Tibial artery (tissue), 4 donors: ENCODE measurements at regions of chr2 and their contacts with region 1.

Region 1: DNA sequence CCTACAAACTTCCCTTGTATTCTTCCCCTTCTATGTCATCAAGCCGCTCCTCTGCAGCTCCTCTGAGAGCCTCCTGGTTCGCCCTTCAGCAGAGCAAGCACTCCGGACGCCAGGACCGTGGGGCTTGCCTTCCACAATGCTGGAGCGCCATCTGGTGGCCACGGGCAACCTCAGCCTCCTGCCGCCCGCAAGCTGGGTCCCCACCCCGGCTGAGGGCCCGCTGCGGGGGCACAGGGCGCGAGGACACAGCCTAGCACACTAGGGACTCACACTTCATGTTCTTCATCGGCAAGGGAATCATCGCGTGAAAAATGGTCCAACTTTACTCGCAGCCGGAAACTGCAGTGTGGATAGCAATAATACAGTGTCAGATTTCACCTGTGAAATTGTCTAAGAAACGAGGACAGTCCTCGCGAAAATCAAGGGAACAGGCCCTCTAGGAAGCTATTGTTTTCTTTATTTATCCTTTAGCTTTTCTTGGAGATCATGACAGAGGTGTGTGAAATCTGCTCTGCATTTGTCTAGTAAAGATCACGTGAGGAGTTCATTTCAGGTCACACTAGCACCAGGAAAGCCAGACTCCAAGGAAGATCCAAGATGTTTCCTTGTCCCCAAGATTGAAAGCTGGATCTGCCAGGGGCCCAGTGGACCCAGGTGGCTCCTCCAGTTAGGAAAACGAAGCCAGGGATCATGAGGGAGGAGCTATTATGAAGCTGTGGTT is 5.8 kb downstream of the PRLH start:
- DNase-seq: peak; percentile 88 to 93
- H3K4me3 ChIP-seq: no peak overlapping the region
- H3K27ac ChIP-seq: no peak overlapping the region
- H3K4me1 ChIP-seq: peaks cover 0 to 20% (median 6%) of the 10 kb centered on the region in 4 donors
- H3K27me3 ChIP-seq: no peaks in the 10 kb centered on the region
- CTCF ChIP-seq: peak; percentile 98 to 99

Region 2: GRCh38 chr2:237122214-237122666 is 449.9 kb before region 1 on chr2:
- intact Hi-C with region 1: loop called (anchors 10 kb)
- DNase-seq: peak; percentile 80 to 81
- H3K4me3 ChIP-seq: no peak overlapping the region
- H3K27ac ChIP-seq: no peak overlapping the region
- H3K4me1 ChIP-seq: no peaks in the 10 kb centered on the region
- H3K27me3 ChIP-seq: no peaks in the 10 kb centered on the region
- CTCF ChIP-seq: peak; percentile 75 to 81

Region 3: GRCh38 chr2:237154082-237154638 is 418.0 kb before region 1 on chr2:
- intact Hi-C with region 1: loop called (anchors 10 kb)
- DNase-seq: peak in 1 of 2 donors; percentile 68
- H3K4me3 ChIP-seq: no peak overlapping the region
- H3K27ac ChIP-seq: peak overlapping the region in 1 of 2 donors; percentile 87
- H3K4me1 ChIP-seq: peaks cover 0 to 23% (median 15%) of the 10 kb centered on the region in 4 donors
- H3K27me3 ChIP-seq: no peaks in the 10 kb centered on the region
- CTCF ChIP-seq: peak; percentile 59 to 61